Naive thymus-derived CD4-positive, alpha-beta T cell (primary cell): ENCODE measurements at regions of chr1 and their contacts with region 1.

Region 1: GRCh38 chr1:93093332-93094006 is 14.4 kb downstream of the MTF2 start:
- DNase-seq: no peak
- ATAC-seq: no peak
- H3K4me3 ChIP-seq: no peak overlapping the region
- H3K4me3 Mint-ChIP-seq: peak overlapping the region in 8 of 10 donors; percentile 23 to 51 (median 33)
- H3K27ac ChIP-seq: no peak overlapping the region
- H3K27ac Mint-ChIP-seq: peak overlapping the region in 7 of 9 donors; percentile 27 to 88 (median 65)
- H3K4me1 ChIP-seq: peaks cover 8 to 21% of the 10 kb centered on the region in 2 donors
- H3K4me1 Mint-ChIP-seq: peaks cover 36 to 84% (median 74%) of the 10 kb centered on the region in 7 donors
- H3K27me3 ChIP-seq: no peaks in the 10 kb centered on the region
- H3K27me3 Mint-ChIP-seq: no peaks in the 10 kb centered on the region

Region 2: GRCh38 chr1:93219443-93219842 is 126.0 kb after region 1 on chr1:
- CTCF ChIA-PET with region 1: no interaction called
- POLR2A ChIA-PET with region 1: no interaction called
- intact Hi-C with region 1: loop called in 1 of 2 experiments (anchors 5 kb)
- DNase-seq: peak in 7 of 9 donors; percentile 3 to 28 (median 19)
- ATAC-seq: peak; percentile 34
- H3K4me3 ChIP-seq: peak overlapping the region; percentile 64
- H3K4me3 Mint-ChIP-seq: peak overlapping the region; percentile 35 to 86 (median 79)
- H3K27ac ChIP-seq: peak overlapping the region; percentile 55
- H3K27ac Mint-ChIP-seq: peak overlapping the region; percentile 37 to 90 (median 69)
- H3K4me1 ChIP-seq: peaks cover 4 to 6% of the 10 kb centered on the region in 2 donors
- H3K4me1 Mint-ChIP-seq: peaks cover 6 to 23% (median 19%) of the 10 kb centered on the region in 7 donors
- H3K27me3 ChIP-seq: no peaks in the 10 kb centered on the region
- H3K27me3 Mint-ChIP-seq: no peaks in the 10 kb centered on the region